ENCODE measurements at regions of chr6 and their contacts with region 1.

Region 1: GRCh38 chr6:38493931-38494547 is 145.7 kb downstream of the BTBD9 start:
- DNase-seq: peak; percentile 54
- ATAC-seq: peak; percentile 40
- H3K4me3 Mint-ChIP-seq: no peak overlapping the region
- H3K27ac Mint-ChIP-seq: no peak overlapping the region
- H3K4me1 Mint-ChIP-seq: peaks cover 6% of the 10 kb centered on the region
- H3K27me3 Mint-ChIP-seq: no peaks in the 10 kb centered on the region
- CTCF ChIP-seq: peak; percentile 98

Region 2: DNA sequence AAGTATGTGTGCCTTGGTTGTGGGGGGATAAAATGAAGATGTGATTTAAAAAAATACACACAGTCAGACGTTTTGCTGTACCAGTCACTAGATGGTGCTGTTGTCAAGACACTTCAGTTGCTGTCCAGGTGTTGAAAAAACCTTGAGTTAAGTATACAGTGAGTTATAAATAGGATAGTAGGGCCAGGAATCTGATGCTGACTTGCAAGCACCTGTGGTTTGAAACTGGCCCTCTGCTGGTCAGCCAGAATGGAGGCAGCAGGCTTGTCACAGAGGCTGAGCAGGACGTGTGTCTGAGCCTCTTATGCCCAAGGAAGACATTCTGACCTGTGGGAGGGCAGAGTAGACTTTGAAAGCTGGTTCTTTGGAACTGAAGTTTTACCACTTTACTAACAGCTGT is 1112.5 kb before region 1 on chr6:
- CTCF ChIA-PET with region 1: interaction called, 4 read pairs
- POLR2A ChIA-PET with region 1: no interaction called
- intact Hi-C with region 1: loop called (anchors 2 kb)
- DNase-seq: no peak
- ATAC-seq: peak; percentile 31
- H3K4me3 Mint-ChIP-seq: no peak overlapping the region
- H3K27ac Mint-ChIP-seq: no peak overlapping the region
- H3K4me1 Mint-ChIP-seq: peaks cover 22% of the 10 kb centered on the region
- H3K27me3 Mint-ChIP-seq: no peaks in the 10 kb centered on the region
- CTCF ChIP-seq: no peak

Region 3: DNA sequence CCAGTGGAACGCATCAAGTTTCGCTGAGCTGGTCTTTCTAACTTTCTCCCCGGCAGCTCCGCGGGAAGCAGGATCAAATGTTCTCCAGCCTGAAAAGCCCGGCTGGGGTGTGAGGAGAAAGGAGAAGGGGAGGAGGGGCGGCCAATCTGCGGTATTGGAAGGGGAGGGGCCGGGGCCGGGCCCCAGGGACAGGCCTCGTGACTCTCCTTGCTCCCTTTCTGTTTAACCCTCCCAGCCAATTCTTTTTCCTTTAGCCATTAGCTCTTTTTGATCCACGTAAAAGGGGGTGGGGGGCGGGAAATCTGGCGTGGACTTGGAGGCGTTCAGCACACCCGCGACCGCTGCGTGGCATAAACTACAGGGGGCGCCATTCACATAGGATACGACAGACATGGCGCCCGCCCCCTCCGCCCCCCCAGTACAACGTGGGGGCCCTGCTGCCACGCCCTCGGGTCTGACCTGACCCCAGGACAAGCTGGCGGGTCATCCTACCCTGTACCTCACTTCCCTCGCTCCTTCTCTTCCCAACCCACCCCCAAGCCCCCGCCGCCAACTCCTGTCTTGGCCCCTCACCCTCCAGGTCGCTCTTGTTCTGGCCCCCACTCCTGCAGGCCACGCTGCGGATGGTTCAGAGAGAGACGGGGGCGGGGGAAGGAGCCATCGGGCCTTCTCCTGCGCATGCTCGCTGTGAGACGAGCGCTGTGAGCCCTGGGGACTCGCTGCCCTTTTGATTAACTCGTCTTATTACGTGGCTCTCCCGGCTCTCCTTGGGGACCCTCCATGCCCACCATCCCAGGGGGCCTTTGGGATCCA is 788.6 kb before region 1 on chr6:
- CTCF ChIA-PET with region 1: interaction called, 5 read pairs
- POLR2A ChIA-PET with region 1: no interaction called
- intact Hi-C with region 1: loop called (anchors 1 kb)
- DNase-seq: peak; percentile 72
- ATAC-seq: peak; percentile 91
- H3K4me3 Mint-ChIP-seq: peak overlapping the region; percentile 86
- H3K27ac Mint-ChIP-seq: peak overlapping the region; percentile 71
- H3K4me1 Mint-ChIP-seq: peaks cover 24% of the 10 kb centered on the region
- H3K27me3 Mint-ChIP-seq: no peaks in the 10 kb centered on the region
- CTCF ChIP-seq: no peak

Region 4: GRCh38 chr6:38034274-38034914 is 459.6 kb before region 1 on chr6:
- CTCF ChIA-PET with region 1: interaction called, 30 read pairs
- POLR2A ChIA-PET with region 1: interaction called, 5 read pairs
- intact Hi-C with region 1: loop called (anchors 1 kb)
- DNase-seq: no peak
- ATAC-seq: no peak
- H3K4me3 Mint-ChIP-seq: no peak overlapping the region
- H3K27ac Mint-ChIP-seq: no peak overlapping the region
- H3K4me1 Mint-ChIP-seq: peaks cover 38% of the 10 kb centered on the region
- H3K27me3 Mint-ChIP-seq: no peaks in the 10 kb centered on the region
- CTCF ChIP-seq: no peak

Region 5: DNA sequence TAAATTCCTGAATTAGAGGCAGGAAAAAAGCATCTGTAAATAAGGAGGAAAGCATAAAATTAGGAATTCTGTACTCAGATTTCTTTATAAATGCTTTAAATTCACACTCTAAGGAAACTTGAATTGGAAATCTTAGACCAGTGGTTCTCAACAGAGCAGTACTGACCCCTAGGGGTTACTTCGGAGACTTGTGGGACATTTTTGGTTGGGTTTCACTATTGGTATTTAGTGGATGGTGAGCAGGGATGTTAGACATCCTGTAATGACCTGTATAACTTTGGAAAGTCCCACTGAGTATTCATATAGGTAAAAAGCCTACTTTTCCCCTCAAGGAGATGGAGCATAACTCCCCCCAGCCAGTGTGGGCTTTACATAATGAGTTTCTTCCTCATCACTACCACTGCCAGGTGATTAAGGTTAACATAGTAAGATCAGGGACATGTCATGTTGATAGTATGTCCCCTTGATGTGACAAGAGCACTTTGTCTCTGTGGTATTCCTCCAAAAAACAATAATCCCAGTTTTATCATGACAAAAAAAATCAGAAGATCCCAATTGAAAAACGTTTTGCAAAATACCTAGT is 177.9 kb after region 1 on chr6:
- CTCF ChIA-PET with region 1: no interaction called
- POLR2A ChIA-PET with region 1: no interaction called
- intact Hi-C with region 1: loop called (anchors 2 kb)
- DNase-seq: no peak
- ATAC-seq: peak; percentile 66
- H3K4me3 Mint-ChIP-seq: no peak overlapping the region
- H3K27ac Mint-ChIP-seq: no peak overlapping the region
- H3K4me1 Mint-ChIP-seq: peaks cover 41% of the 10 kb centered on the region
- H3K27me3 Mint-ChIP-seq: no peaks in the 10 kb centered on the region
- CTCF ChIP-seq: no peak

Region 6: GRCh38 chr6:39430871-39431523 is 937.0 kb after region 1 on chr6:
- CTCF ChIA-PET with region 1: no interaction called
- POLR2A ChIA-PET with region 1: no interaction called
- intact Hi-C with region 1: no loop called
- DNase-seq: no peak
- ATAC-seq: no peak
- H3K4me3 Mint-ChIP-seq: no peak overlapping the region
- H3K27ac Mint-ChIP-seq: no peak overlapping the region
- H3K4me1 Mint-ChIP-seq: peaks cover 4% of the 10 kb centered on the region
- H3K27me3 Mint-ChIP-seq: peaks cover 7% of the 10 kb centered on the region
- CTCF ChIP-seq: no peak

Measured in activated B cell treated with CpG ODN at 0.5 μM for 24 hours (primary cell).